ENCODE measurements at regions of chr10 and their contacts with region 1.

Region 1: DNA sequence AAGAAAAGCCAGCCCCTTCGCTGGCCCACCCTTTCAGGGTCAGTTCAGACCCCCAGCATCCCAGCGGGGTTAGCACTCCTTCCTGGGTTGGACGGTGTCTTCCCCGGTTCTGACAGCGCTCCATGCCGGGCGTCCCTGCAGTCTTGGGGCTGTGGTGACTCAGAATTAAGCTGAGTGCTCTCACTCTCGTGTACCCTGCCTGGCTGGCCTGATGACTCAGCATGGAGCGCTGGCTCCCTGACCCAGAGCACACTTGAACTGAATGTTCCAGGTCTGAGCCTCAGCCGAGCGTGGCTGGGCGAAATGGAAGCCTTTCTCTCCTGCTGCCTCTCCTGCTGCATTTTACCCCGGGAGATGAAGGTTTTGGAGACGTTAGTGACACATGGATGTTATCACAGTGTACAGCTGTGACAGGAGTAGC is 7.1 kb downstream of the BAG3 start:
- DNase-seq: peak; percentile 92
- H3K4me3 ChIP-seq: peak overlapping the region in 2 of 3 experiments; percentile 20 to 23
- H3K27ac ChIP-seq: peak overlapping the region; percentile 56
- H3K4me1 ChIP-seq: peaks cover 68% of the 10 kb centered on the region
- H3K27me3 ChIP-seq: no peaks in the 10 kb centered on the region
- CTCF ChIP-seq: no peak

Region 2: GRCh38 chr10:119725828-119726675 is 67.8 kb after region 1 on chr10 and contains the start of gene INPP5F:
- CTCF ChIA-PET with region 1: no interaction called
- dilution Hi-C with region 1: no loop called
- in situ Hi-C with region 1: no loop called
- intact Hi-C with region 1: loop called (anchors 2 kb)
- DNase-seq: peak; percentile 98
- H3K4me3 ChIP-seq: peak within 1 kb of the TSS; percentile 76 to 95 (median 85)
- H3K27ac ChIP-seq: peak within 1 kb of the TSS; percentile 54
- H3K4me1 ChIP-seq: peaks cover 15% of the 10 kb centered on the region
- H3K27me3 ChIP-seq: no peaks in the 10 kb centered on the region
- CTCF ChIP-seq: peak in 1 of 2 donors; percentile 27
- total RNA-seq, gene INPP5F: 19.3 to 22.1 TPM

Measured in mammary epithelial cell (primary cell).